GM12878 (cell line): ENCODE measurements at regions of chr2 and their contacts with region 1.

Region 1: GRCh38 chr2:64133828-64134227 is 10.4 kb downstream of the PELI1 start:
- DNase-seq: no peak
- ATAC-seq: no peak
- H3K4me3 ChIP-seq: no peak overlapping the region
- H3K27ac ChIP-seq: no peak overlapping the region; the same call in 1 of the 2 replicates
- H3K4me1 ChIP-seq: peaks cover 46% of the 10 kb centered on the region
- H3K27me3 ChIP-seq: no peaks in the 10 kb centered on the region
- CTCF ChIP-seq: no peak
- EP300 ChIP-seq: no peak
- POLR2A ChIP-seq: no peak
- RAD21 ChIP-seq: no peak

Region 2: GRCh38 chr2:63875131-63875527 is 258.7 kb before region 1 on chr2:
- CTCF ChIA-PET with region 1: no interaction called
- POLR2A ChIA-PET with region 1: no interaction called
- RAD21 ChIA-PET with region 1: no interaction called
- SMC1A ChIA-PET with region 1: no interaction called
- in situ Hi-C with region 1: no loop called
- intact Hi-C with region 1: no loop called
- DNase-seq: no peak
- ATAC-seq: no peak
- H3K4me3 ChIP-seq: no peak overlapping the region
- H3K27ac ChIP-seq: no peak overlapping the region
- H3K4me1 ChIP-seq: no peaks in the 10 kb centered on the region
- H3K27me3 ChIP-seq: no peaks in the 10 kb centered on the region
- CTCF ChIP-seq: no peak
- EP300 ChIP-seq: no peak
- POLR2A ChIP-seq: no peak
- RAD21 ChIP-seq: no peak

Region 3: GRCh38 chr2:64114063-64114911 is 19.5 kb before region 1 on chr2:
- CTCF ChIA-PET with region 1: interaction called, 7 read pairs
- POLR2A ChIA-PET with region 1: interaction called, 10 read pairs
- RAD21 ChIA-PET with region 1: interaction called, 53 read pairs
- SMC1A ChIA-PET with region 1: interaction called, 495 read pairs
- in situ Hi-C with region 1: no loop called
- intact Hi-C with region 1: no loop called
- DNase-seq: peak; percentile 56
- ATAC-seq: peak; percentile 65
- H3K4me3 ChIP-seq: peak overlapping the region; percentile 28; the same call in 1 of the 2 replicates
- H3K27ac ChIP-seq: peak overlapping the region; percentile 72
- H3K4me1 ChIP-seq: peaks cover 50% of the 10 kb centered on the region
- H3K27me3 ChIP-seq: no peaks in the 10 kb centered on the region
- CTCF ChIP-seq: no peak
- EP300 ChIP-seq: peak; percentile 59 to 82; a peak in 3 of 4 replicates
- POLR2A ChIP-seq: no peak
- RAD21 ChIP-seq: no peak

Region 4: GRCh38 chr2:64119369-64119768 is 14.5 kb before region 1 on chr2:
- CTCF ChIA-PET with region 1: interaction called, 26 read pairs
- POLR2A ChIA-PET with region 1: interaction called, 11 read pairs
- RAD21 ChIA-PET with region 1: interaction called, 39 read pairs
- SMC1A ChIA-PET with region 1: interaction called, 111 read pairs
- in situ Hi-C with region 1: no loop called
- intact Hi-C with region 1: no loop called
- DNase-seq: no peak
- ATAC-seq: no peak
- H3K4me3 ChIP-seq: no peak overlapping the region
- H3K27ac ChIP-seq: no peak overlapping the region; the same call in 1 of the 2 replicates
- H3K4me1 ChIP-seq: peaks cover 32% of the 10 kb centered on the region
- H3K27me3 ChIP-seq: no peaks in the 10 kb centered on the region
- CTCF ChIP-seq: no peak
- EP300 ChIP-seq: no peak
- POLR2A ChIP-seq: no peak
- RAD21 ChIP-seq: no peak

Region 5: DNA sequence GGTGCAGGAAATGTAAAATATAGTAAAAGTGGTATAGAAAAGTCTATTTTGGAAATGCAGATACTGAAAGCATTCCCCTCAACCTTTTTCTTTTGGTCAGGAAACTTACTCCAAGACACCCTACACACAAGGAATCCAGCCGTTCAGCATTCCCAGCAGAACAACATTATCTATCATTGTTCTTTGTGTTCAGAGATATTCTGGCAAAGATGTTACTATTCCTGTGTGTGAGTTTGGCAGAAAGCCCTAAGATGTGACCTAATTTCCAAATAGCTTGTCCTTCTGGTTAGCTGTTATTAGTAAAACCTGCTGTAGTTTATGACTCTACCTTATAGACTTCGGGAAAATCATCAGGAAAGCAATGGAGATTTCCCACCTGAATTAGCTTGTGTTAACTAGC is 88.5 kb after region 1 on chr2:
- CTCF ChIA-PET with region 1: no interaction called
- POLR2A ChIA-PET with region 1: interaction called, 4 read pairs
- RAD21 ChIA-PET with region 1: interaction called, 4 read pairs
- SMC1A ChIA-PET with region 1: interaction called, 11 read pairs
- in situ Hi-C with region 1: no loop called
- intact Hi-C with region 1: no loop called
- DNase-seq: no peak
- ATAC-seq: no peak
- H3K4me3 ChIP-seq: no peak overlapping the region
- H3K27ac ChIP-seq: no peak overlapping the region; the same call in 1 of the 2 replicates
- H3K4me1 ChIP-seq: peaks cover 14% of the 10 kb centered on the region
- H3K27me3 ChIP-seq: no peaks in the 10 kb centered on the region
- CTCF ChIP-seq: no peak
- EP300 ChIP-seq: no peak
- POLR2A ChIP-seq: no peak
- RAD21 ChIP-seq: no peak

Region 6: DNA sequence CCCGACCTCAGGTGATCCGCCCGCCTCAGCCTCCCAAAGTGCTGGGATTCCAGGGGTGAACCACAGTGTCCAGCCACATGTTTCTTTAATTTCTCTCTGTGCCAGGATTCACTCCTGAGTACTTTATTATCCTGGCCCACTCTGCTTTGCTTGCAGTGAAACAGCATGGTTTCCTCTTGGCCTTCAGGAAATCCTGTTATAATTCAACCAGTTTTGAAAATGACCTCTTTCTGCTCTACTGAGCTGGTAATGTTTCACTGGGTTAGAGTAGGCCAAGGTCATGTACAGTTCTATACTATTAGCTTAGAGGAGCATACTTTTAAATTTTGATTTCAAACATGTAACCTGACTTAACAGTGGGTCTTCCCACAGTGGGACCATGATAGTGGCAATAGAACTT is 101.0 kb after region 1 on chr2:
- CTCF ChIA-PET with region 1: no interaction called
- POLR2A ChIA-PET with region 1: no interaction called
- RAD21 ChIA-PET with region 1: no interaction called
- SMC1A ChIA-PET with region 1: no interaction called
- in situ Hi-C with region 1: no loop called
- intact Hi-C with region 1: no loop called
- DNase-seq: no peak
- ATAC-seq: peak; percentile 45
- H3K4me3 ChIP-seq: no peak overlapping the region
- H3K27ac ChIP-seq: no peak overlapping the region
- H3K4me1 ChIP-seq: peaks cover 3% of the 10 kb centered on the region; the same call in 1 of the 2 replicates
- H3K27me3 ChIP-seq: no peaks in the 10 kb centered on the region
- CTCF ChIP-seq: no peak
- EP300 ChIP-seq: no peak
- POLR2A ChIP-seq: no peak
- RAD21 ChIP-seq: no peak